A673 (cell line): ENCODE measurements at regions of chr5 and their contacts with region 1.

Region 1: GRCh38 chr5:80809451-80809850 is 150.7 kb upstream of the RASGRF2 start:
- DNase-seq: no peak
- H3K4me3 ChIP-seq: no peak overlapping the region
- H3K27ac ChIP-seq: no peak overlapping the region
- H3K4me1 ChIP-seq: no peaks in the 10 kb centered on the region
- H3K27me3 ChIP-seq: no peaks in the 10 kb centered on the region
- CTCF ChIP-seq: no peak

Region 2: GRCh38 chr5:80797428-80798024 is 11.9 kb before region 1 on chr5:
- CTCF ChIA-PET with region 1: no interaction called
- POLR2A ChIA-PET with region 1: interaction called, 19 read pairs
- intact Hi-C with region 1: no loop called
- DNase-seq: no peak
- H3K4me3 ChIP-seq: no peak overlapping the region
- H3K27ac ChIP-seq: no peak overlapping the region
- H3K4me1 ChIP-seq: no peaks in the 10 kb centered on the region
- H3K27me3 ChIP-seq: no peaks in the 10 kb centered on the region
- CTCF ChIP-seq: no peak